ENCODE measurements at regions of chr4 and their contacts with region 1.

Region 1: DNA sequence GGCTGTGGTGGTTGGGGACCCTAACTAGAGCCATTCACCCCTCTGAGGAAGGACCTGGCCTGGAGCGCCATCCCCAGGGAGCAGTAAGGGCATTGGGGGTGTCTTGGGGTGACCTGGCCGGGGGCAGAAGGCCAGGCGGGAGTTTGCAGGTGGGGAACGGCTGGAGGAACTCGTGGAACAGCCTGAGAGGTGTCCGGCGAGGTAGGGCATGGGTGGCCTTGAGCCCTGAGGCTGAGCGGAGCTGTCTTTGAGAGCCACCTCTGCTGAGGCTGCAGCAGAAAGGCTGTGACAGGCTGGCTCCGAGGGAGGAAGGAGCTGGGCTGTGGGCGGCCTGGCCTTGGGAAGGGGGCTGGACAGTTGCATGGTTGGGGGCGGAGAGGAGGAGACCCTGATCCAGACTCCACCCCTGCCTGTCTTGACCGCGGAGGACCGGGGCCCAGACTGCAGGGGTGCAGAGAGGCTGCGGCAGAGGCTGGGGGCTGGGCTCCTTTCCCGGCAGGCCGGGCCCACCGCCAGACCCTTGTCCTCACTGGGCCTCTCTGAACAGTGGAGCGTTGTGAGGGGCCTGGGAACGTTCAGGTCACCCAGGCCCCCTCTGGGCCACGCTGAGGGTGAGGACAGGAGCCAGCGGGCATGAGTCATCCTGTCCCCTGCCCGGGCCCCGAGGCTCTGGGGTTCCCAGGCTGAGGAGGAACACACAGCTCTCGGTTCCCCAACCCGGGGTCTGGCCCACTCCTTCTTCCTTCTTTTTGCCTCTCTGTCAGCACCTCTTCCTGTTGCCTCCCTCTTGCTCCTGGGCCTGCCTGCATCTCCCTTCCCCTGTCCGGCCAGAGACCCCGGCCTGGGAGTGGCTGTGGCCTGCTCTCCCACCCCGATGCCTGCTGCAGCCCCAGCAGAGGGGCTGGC is 8.1 kb downstream of the SH3BP2 start:
- DNase-seq: peak in 2 of 9 donors; percentile 7 to 37
- ATAC-seq: peak; percentile 70
- H3K4me3 ChIP-seq: no peak overlapping the region
- H3K4me3 Mint-ChIP-seq: peak overlapping the region in 6 of 10 donors; percentile 13 to 96 (median 40)
- H3K27ac ChIP-seq: no peak overlapping the region
- H3K27ac Mint-ChIP-seq: peak overlapping the region in 8 of 9 donors; percentile 17 to 79 (median 41)
- H3K4me1 ChIP-seq: peaks cover 30 to 45% of the 10 kb centered on the region in 2 donors
- H3K4me1 Mint-ChIP-seq: peaks cover 25 to 47% (median 42%) of the 10 kb centered on the region in 7 donors
- H3K27me3 ChIP-seq: no peaks in the 10 kb centered on the region
- H3K27me3 Mint-ChIP-seq: no peaks in the 10 kb centered on the region

Region 2: GRCh38 chr4:1855333-1856041 is 945.5 kb before region 1 on chr4:
- CTCF ChIA-PET with region 1: no interaction called
- POLR2A ChIA-PET with region 1: no interaction called
- intact Hi-C with region 1: no loop called
- DNase-seq: peak in 2 of 9 donors; percentile 14 to 15
- ATAC-seq: peak; percentile 31
- H3K4me3 ChIP-seq: peak overlapping the region; percentile 86
- H3K4me3 Mint-ChIP-seq: peak overlapping the region; percentile 67 to 88 (median 83)
- H3K27ac ChIP-seq: peak overlapping the region; percentile 70
- H3K27ac Mint-ChIP-seq: peak overlapping the region in 6 of 9 donors; percentile 17 to 75 (median 47)
- H3K4me1 ChIP-seq: peaks cover 10 to 14% of the 10 kb centered on the region in 2 donors
- H3K4me1 Mint-ChIP-seq: peaks cover 38 to 48% (median 45%) of the 10 kb centered on the region in 7 donors
- H3K27me3 ChIP-seq: no peaks in the 10 kb centered on the region
- H3K27me3 Mint-ChIP-seq: no peaks in the 10 kb centered on the region

Region 3: GRCh38 chr4:2787230-2788088 is 13.5 kb before region 1 on chr4:
- CTCF ChIA-PET with region 1: interaction called, 5 read pairs
- POLR2A ChIA-PET with region 1: interaction called, 4 read pairs
- intact Hi-C with region 1: loop called in 1 of 2 experiments (anchors 1 kb)
- DNase-seq: peak in 7 of 9 donors; percentile 30 to 68 (median 56)
- ATAC-seq: peak; percentile 65
- H3K4me3 ChIP-seq: no peak overlapping the region
- H3K4me3 Mint-ChIP-seq: peak overlapping the region; percentile 47 to 77 (median 56)
- H3K27ac ChIP-seq: peak overlapping the region; percentile 80
- H3K27ac Mint-ChIP-seq: peak overlapping the region; percentile 86 to 95 (median 90)
- H3K4me1 ChIP-seq: peaks cover 25 to 30% of the 10 kb centered on the region in 2 donors
- H3K4me1 Mint-ChIP-seq: peaks cover 21 to 54% (median 37%) of the 10 kb centered on the region in 7 donors
- H3K27me3 ChIP-seq: no peaks in the 10 kb centered on the region
- H3K27me3 Mint-ChIP-seq: peaks cover 0 to 13% (median 0%) of the 10 kb centered on the region in 5 donors

Region 4: GRCh38 chr4:2817701-2818350 is 16.9 kb after region 1 on chr4:
- CTCF ChIA-PET with region 1: interaction called, 3 read pairs
- POLR2A ChIA-PET with region 1: interaction called, 20 read pairs
- intact Hi-C with region 1: no loop called
- DNase-seq: no peak
- ATAC-seq: peak; percentile 52
- H3K4me3 ChIP-seq: peak overlapping the region; percentile 35
- H3K4me3 Mint-ChIP-seq: peak overlapping the region; percentile 77 to 93 (median 82)
- H3K27ac ChIP-seq: peak overlapping the region; percentile 54
- H3K27ac Mint-ChIP-seq: peak overlapping the region in 6 of 9 donors; percentile 9 to 94 (median 82)
- H3K4me1 ChIP-seq: peaks cover 36 to 54% of the 10 kb centered on the region in 2 donors
- H3K4me1 Mint-ChIP-seq: peaks cover 45 to 67% (median 56%) of the 10 kb centered on the region in 7 donors
- H3K27me3 ChIP-seq: no peaks in the 10 kb centered on the region
- H3K27me3 Mint-ChIP-seq: no peaks in the 10 kb centered on the region

Region 5: GRCh38 chr4:2837904-2838496 is 37.1 kb after region 1 on chr4:
- CTCF ChIA-PET with region 1: interaction called, 3 read pairs
- POLR2A ChIA-PET with region 1: interaction called, 9 read pairs
- intact Hi-C with region 1: loop called in 1 of 2 experiments (anchors 1 kb)
- DNase-seq: peak in 7 of 9 donors; percentile 74 to 86 (median 83)
- ATAC-seq: peak; percentile 94
- H3K4me3 ChIP-seq: peak overlapping the region; percentile 66
- H3K4me3 Mint-ChIP-seq: peak overlapping the region; percentile 82 to 96 (median 88)
- H3K27ac ChIP-seq: peak overlapping the region; percentile 82
- H3K27ac Mint-ChIP-seq: peak overlapping the region; percentile 91 to 98 (median 94)
- H3K4me1 ChIP-seq: peaks cover 54 to 60% of the 10 kb centered on the region in 2 donors
- H3K4me1 Mint-ChIP-seq: peaks cover 48 to 83% (median 54%) of the 10 kb centered on the region in 7 donors
- H3K27me3 ChIP-seq: no peaks in the 10 kb centered on the region
- H3K27me3 Mint-ChIP-seq: no peaks in the 10 kb centered on the region